Motor neuron (in vitro differentiated cells): ENCODE measurements at regions of chr2 and their contacts with region 1.

Region 1: DNA sequence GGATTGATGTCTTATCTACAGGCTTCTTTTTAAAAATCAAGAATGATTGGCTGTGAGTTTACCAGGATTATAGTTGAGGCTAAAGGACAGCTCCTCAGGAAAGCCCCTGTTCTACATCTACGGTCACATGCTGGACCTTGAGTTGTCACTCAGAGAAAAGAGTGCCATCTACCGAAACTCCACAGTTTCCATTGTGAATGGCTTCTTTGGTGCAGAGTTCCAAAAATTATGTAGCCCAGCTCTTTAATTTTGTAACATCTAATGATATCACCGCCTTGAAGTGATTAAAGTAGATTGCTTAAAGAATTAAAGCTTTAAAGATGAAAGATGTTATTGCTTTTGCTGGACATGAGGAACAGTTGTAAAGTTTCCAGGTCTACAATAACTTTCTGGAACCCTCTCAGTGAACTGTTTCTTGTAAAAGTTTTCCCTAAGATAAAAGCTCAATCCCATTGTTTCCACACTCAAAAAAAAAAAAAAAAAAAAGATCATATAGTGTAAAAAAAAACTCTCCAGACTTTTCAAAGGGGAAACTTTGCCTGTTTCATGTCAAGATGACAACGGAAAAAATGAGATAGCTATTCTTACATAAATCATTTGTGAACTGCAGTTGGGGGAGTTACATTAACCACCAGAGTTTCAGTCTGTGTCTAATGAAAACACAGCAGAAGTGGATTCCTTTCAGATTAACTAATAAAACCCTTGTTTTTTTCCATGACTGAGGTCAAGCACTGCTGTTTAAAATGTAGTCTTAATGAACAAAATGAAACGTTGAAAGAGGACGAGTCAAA is 4.3 kb downstream of the COL3A1 start:
- ATAC-seq: peak in 3 of 8 experiments; percentile 12 to 23 (median 21)
- H3K4me3 ChIP-seq: no peak overlapping the region
- H3K27ac ChIP-seq: no peak overlapping the region
- H3K4me1 ChIP-seq: no peaks in the 10 kb centered on the region

Region 2: GRCh38 chr2:188788621-188789020 is 189.9 kb before region 1 on chr2:
- in situ Hi-C with region 1: loop called in 1 of 9 experiments (anchors 25 kb)
- ATAC-seq: peak in 2 of 8 experiments; percentile 21 to 27
- H3K4me3 ChIP-seq: no peak overlapping the region
- H3K27ac ChIP-seq: no peak overlapping the region
- H3K4me1 ChIP-seq: no peaks in the 10 kb centered on the region

Region 3: GRCh38 chr2:189115126-189115525 is 136.6 kb after region 1 on chr2:
- in situ Hi-C with region 1: no loop called
- ATAC-seq: peak in 1 of 8 experiments; percentile 32
- H3K4me3 ChIP-seq: no peak overlapping the region
- H3K27ac ChIP-seq: no peak overlapping the region
- H3K4me1 ChIP-seq: no peaks in the 10 kb centered on the region